ENCODE measurements at regions of chr3 and their contacts with region 1.

Region 1: GRCh38 chr3:131033480-131034080 is 6.9 kb downstream of the NEK11 start:
- DNase-seq: no peak
- ATAC-seq: no peak
- H3K4me3 ChIP-seq: no peak overlapping the region
- H3K27ac ChIP-seq: no peak overlapping the region
- H3K4me1 ChIP-seq: no peaks in the 10 kb centered on the region
- H3K27me3 ChIP-seq: no peaks in the 10 kb centered on the region
- CTCF ChIP-seq: peak; percentile 55

Region 2: DNA sequence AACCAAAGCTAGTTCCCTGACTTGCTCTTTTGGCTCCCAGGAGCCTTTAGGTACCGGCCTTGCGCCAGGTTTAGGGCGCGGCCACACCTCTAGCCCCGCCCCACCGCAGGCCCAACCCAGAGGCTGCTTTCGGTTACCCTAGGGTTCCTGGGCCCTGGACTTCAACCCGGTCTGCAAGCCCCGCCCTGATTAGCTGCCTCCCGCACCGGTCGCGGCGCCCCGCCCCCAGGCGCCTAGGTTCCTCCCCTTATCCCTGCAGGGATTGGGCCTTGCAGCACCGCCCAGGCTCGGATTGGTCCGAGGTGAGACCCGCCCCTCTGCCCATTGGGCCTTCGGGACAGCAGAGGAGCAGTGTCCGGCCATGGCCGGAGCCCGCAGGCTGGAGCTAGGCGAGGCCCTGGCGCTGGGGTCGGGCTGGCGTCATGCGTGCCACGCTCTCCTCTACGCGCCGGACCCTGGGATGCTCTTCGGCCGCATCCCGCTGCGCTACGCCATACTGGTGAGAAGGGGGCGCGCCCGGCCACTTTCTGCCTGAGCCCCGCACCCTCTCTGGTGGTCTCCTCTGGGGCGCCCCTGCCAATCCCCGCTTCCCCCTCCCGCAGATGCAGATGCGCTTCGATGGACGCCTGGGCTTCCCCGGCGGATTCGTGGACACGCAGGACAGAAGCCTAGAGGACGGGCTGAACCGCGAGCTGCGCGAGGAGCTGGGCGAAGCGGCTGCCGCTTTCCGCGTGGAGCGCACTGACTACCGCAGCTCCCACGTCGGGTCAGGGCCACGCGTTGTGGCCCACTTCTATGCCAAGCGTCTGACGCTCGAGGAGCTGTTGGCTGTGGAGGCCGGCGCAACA is 348.1 kb after region 1 on chr3 and contains the start of gene NUDT16:
- intact Hi-C with region 1: loop called in 1 of 2 experiments (anchors 10 kb)
- DNase-seq: peak; percentile 100
- ATAC-seq: peak; percentile 97 to 100 (median 100)
- H3K4me3 ChIP-seq: peak within 1 kb of the TSS; percentile 87
- H3K27ac ChIP-seq: peak within 1 kb of the TSS; percentile 86
- H3K4me1 ChIP-seq: peaks cover 11% of the 10 kb centered on the region
- H3K27me3 ChIP-seq: no peaks in the 10 kb centered on the region
- CTCF ChIP-seq: no peak
- total RNA-seq, gene NUDT16: 9.0 to 25.9 (median 11.4) TPM

Region 3: GRCh38 chr3:132029182-132029902 is 995.8 kb after region 1 on chr3:
- intact Hi-C with region 1: loop called (anchors 10 kb)
- DNase-seq: peak; percentile 72 to 83
- ATAC-seq: peak; percentile 36 to 80 (median 72)
- H3K4me3 ChIP-seq: no peak overlapping the region
- H3K27ac ChIP-seq: no peak overlapping the region
- H3K4me1 ChIP-seq: no peaks in the 10 kb centered on the region
- H3K27me3 ChIP-seq: peaks cover 3 to 29% (median 6%) of the 10 kb centered on the region in 3 donors
- CTCF ChIP-seq: peak; percentile 71

Region 4: DNA sequence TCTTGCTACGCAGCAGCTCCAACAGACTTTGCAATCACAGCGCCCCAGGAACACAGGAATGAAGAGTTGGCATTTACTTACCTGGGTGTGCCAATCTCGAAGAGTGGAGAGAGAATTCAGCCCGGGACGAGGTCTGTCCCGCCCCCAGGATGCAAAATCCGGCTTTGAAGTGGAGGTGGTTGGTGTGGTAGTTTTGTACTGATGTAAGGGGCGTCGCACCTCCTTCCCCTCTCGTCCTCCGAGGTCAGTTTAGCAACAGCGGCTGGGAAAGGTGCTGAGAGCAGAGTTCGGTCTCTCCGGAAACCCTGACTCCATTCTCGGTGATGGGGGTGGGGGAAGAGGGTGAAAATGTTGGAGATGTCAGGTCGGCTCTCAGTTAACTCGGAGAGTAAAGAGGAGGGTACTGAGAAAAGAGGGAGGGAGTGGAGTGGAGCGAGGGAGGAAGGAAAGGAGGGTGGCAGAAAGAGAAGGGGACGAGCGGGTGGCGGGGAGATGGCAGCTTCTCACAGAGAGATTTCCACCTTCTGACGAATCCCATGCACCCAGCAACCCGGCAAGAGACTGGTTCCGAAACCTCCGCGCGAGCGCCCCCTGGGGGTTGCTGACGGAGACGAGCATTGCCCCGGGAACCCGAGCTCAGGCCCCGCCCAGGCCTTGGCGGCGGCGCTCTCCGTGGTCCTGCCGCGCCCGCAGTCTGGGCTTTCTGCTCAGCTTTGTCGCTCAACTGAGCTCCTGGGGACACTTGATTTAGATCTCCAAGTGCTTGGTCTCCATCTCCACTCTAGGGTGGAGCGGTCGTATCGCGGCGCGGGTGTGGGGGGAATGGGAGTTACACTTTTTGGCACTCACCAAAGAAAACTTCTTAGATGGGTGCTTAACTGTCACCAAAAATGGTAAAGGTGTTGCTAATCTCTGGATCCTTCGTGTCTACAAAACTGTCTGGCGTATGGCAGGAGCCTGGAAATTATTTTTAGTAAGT is 1001.2 kb after region 1 on chr3 and contains the start of gene CPNE4:
- intact Hi-C with region 1: loop called (anchors 10 kb)
- DNase-seq: peak; percentile 75 to 80
- ATAC-seq: peak in 3 of 4 donors; percentile 65 to 76 (median 74)
- H3K4me3 ChIP-seq: peak within 1 kb of the TSS; percentile 2
- H3K27ac ChIP-seq: no peak within 1 kb of the TSS
- H3K4me1 ChIP-seq: no peaks in the 10 kb centered on the region
- H3K27me3 ChIP-seq: peaks cover 12 to 64% (median 15%) of the 10 kb centered on the region in 3 donors
- CTCF ChIP-seq: peak; percentile 47
- total RNA-seq, gene CPNE4: not detected